CD4-positive, alpha-beta memory T cell (primary cell): ENCODE measurements at regions of chr10 and their contacts with region 1.

Region 1: DNA sequence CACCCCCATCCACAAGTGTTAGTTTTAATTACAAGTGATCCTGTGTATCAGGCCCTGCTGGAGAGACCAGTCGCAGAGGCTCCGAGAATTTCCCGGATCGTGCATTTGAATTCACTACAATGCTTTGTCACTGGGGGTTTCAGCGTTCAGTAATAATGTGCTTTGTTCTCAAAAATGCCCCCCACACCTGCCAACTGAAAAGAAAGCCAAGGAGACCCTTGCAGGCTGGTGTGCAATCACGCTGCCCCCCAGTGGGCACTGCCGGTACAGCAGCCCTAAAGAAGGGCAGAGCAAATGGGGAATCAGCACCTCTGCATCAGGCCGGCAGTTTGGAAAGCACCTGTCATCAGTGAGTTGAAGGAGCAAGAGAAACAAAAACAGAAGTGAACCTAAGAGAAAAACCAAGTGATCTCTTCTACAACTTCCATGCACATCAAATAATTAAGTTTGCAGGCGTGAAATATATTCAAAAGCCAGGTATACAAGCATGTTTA is 177.6 kb downstream of the PARD3 start:
- DNase-seq: peak; percentile 43 to 55 (median 48)
- H3K4me3 ChIP-seq: no peak overlapping the region
- H3K4me3 Mint-ChIP-seq: peak overlapping the region in 3 of 8 donors; percentile 3 to 47 (median 39)
- H3K27ac ChIP-seq: no peak overlapping the region
- H3K27ac Mint-ChIP-seq: no peak overlapping the region
- H3K4me1 ChIP-seq: no peaks in the 10 kb centered on the region
- H3K4me1 Mint-ChIP-seq: peaks cover 5 to 14% (median 9%) of the 10 kb centered on the region in 4 donors
- H3K27me3 ChIP-seq: no peaks in the 10 kb centered on the region
- H3K27me3 Mint-ChIP-seq: no peaks in the 10 kb centered on the region

Region 2: DNA sequence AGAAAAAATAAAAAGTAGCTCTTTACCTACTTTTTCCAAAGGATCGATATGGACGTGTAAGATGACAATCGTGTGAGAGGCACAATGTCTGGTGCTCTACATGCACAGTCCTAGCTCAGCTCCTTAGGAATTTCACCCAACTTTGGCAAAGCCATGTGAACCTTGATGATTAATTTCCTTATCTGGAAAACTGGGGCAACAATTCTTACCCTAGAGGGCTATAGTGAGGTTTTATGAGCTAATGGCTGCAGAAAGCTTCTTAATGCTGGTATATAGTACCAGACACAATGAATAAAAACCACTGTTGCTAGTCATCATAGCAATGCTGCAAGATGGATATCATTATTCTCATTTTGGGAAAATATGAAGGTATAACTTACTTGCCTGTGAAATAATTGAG is 25.0 kb before region 1 on chr10:
- CTCF ChIA-PET with region 1: interaction called, 10 read pairs
- POLR2A ChIA-PET with region 1: no interaction called
- intact Hi-C with region 1: no loop called
- DNase-seq: no peak
- H3K4me3 ChIP-seq: no peak overlapping the region
- H3K4me3 Mint-ChIP-seq: no peak overlapping the region
- H3K27ac ChIP-seq: no peak overlapping the region
- H3K27ac Mint-ChIP-seq: no peak overlapping the region
- H3K4me1 ChIP-seq: no peaks in the 10 kb centered on the region
- H3K4me1 Mint-ChIP-seq: no peaks in the 10 kb centered on the region
- H3K27me3 ChIP-seq: no peaks in the 10 kb centered on the region
- H3K27me3 Mint-ChIP-seq: peaks cover 4 to 9% of the 10 kb centered on the region in 2 donors

Region 3: GRCh38 chr10:34650156-34650555 is 12.7 kb after region 1 on chr10:
- CTCF ChIA-PET with region 1: interaction called, 64 read pairs
- POLR2A ChIA-PET with region 1: interaction called, 3 read pairs
- intact Hi-C with region 1: no loop called
- DNase-seq: no peak
- H3K4me3 ChIP-seq: no peak overlapping the region
- H3K4me3 Mint-ChIP-seq: no peak overlapping the region
- H3K27ac ChIP-seq: no peak overlapping the region
- H3K27ac Mint-ChIP-seq: no peak overlapping the region
- H3K4me1 ChIP-seq: no peaks in the 10 kb centered on the region
- H3K4me1 Mint-ChIP-seq: no peaks in the 10 kb centered on the region
- H3K27me3 ChIP-seq: no peaks in the 10 kb centered on the region
- H3K27me3 Mint-ChIP-seq: peaks cover 3 to 8% of the 10 kb centered on the region in 2 donors